ENCODE measurements at regions of chr6 and their contacts with region 1.

Region 1: GRCh38 chr6:122268394-122268793 is 131.1 kb upstream of the HSF2 start:
- DNase-seq: no peak
- H3K27ac ChIP-seq: no peak overlapping the region
- CTCF ChIP-seq: no peak

Region 2: DNA sequence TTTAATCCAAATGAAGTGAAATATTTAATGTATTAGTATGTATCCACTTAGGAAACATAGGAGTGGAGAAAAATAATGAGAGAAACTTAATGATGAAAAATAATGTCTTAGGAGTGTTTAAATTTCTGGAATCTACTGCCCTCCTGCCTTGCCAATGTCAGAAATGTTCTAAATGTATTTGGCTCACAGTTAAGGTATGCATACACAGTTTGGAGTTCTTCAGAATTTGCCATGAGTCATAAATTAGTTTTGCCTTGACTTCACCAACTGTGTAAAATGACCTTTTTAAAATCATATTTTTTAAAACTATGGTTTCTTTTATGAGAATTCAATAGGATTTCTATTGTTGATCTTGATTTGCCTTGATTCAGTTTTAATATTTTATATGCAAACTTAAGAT is 60.6 kb before region 1 on chr6:
- CTCF ChIA-PET with region 1: no interaction called
- POLR2A ChIA-PET with region 1: no interaction called
- DNase-seq: no peak
- H3K27ac ChIP-seq: no peak overlapping the region
- CTCF ChIP-seq: no peak

Region 3: DNA sequence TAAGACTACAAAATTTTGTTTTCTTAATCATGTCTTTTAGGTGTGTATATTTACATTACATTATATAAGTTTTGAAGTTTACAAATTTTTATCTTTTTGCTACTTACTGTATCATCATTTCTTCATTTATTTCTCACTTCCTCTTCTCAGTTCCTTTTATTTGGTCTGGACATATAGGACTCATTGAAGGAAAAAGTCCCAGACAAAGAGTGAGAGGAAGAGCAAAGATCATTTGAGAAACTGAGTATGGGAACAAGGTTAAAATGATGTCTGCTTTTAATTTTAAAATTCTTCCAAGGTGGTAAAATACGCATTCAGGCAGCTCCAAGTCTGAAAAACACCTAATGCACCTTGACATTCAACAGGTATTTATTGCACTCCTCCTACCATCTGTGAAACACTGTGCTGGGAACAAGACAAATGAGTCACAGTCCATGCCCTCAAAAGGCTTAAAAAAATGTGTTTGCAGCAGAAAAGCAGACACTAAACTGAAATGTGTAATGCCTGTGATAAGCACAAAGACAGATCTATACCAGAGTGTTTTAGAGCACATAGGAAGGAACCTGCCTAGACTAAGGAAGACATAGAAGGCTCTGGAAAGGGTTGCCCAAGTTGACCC is 405.1 kb after region 1 on chr6:
- CTCF ChIA-PET with region 1: interaction called, 10 read pairs
- POLR2A ChIA-PET with region 1: no interaction called
- DNase-seq: peak; percentile 13
- H3K27ac ChIP-seq: no peak overlapping the region
- CTCF ChIP-seq: no peak